CD14-positive monocyte (primary cell): ENCODE measurements at regions of chr16 and their contacts with region 1.

Region 1: DNA sequence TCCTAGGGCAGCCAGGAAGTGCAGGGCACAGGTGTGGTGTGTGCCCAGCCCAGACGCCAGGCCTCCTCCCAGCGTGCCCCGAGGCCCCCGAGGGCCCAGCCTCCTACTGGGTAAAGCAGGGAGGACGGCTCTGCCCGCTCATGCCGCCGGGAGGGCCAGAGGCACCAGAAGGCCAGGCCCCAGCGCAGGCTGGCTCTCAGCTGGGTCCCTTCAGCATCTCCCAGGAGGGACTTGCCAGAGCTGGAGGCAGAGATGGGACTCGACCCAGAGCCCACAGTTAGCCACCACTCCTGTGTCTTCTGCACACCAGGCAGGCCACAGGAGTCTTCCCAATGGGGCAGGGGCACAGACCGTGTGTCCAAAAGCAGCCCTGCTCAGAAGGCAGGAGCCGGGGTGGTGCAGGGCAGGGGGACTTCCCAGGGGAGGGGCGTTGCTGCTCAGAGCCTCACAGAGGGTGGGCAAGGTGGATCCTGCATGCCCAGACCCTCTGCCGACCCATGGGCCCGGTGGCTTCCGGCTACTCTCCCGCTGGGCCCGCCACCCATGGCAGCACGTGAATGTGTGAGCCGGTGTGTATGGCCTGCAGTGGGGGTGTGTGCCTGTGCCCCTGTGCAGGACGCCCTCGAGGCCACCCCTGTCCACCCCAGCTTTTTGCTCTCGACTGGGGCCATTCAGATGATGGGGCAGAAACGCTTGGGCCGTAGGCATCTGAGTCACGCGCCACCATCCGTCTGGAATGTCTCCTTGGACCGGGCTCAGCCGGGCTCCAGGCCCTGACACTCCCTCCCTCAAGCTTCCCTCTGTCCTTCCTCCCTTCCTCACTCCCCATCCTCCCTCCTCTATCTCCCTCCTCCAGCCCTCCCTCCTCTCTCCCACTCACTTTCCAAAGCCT is 5.7 kb upstream of the ZNF469 start:
- DNase-seq: no peak
- H3K4me3 ChIP-seq: no peak overlapping the region
- H3K4me3 Mint-ChIP-seq: no peak overlapping the region
- H3K27ac ChIP-seq: no peak overlapping the region
- H3K27ac Mint-ChIP-seq: no peak overlapping the region
- H3K4me1 ChIP-seq: no peaks in the 10 kb centered on the region
- H3K4me1 Mint-ChIP-seq: no peaks in the 10 kb centered on the region
- H3K27me3 ChIP-seq: peaks cover 0 to 14% of the 10 kb centered on the region in 2 donors
- H3K27me3 Mint-ChIP-seq: peaks cover 3 to 9% (median 7%) of the 10 kb centered on the region in 3 donors
- CTCF ChIP-seq: no peak

Region 2: DNA sequence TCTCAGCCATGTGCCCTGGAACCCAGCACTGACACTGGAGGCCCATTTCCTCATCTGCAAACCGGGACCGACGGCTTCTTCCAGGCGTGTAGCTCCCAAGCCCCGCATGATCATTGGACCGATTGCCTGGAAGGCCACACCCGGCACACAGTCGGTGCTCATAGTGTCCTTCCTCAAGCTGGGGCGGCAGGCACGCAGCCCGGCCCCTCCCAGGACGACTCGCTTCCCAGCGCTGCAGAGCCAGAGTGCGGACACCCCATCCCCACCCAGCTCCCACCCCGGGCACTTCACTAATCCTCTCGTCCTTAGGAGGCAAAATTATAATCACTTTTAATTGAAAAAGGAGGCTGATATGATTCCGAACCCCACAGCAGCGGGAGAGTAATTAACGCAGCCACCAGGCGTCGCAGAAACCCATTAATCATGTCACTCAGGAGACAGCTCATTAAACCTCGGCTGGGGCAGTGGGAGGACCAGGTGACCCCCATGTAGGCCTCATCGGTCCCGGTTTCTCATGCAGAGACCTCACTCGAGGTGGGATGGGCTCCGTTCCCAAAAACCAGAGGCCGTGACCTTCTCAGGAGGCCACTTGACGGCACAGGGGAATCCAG is 38.7 kb after region 1 on chr16:
- intact Hi-C with region 1: no loop called
- DNase-seq: no peak
- H3K4me3 ChIP-seq: no peak overlapping the region
- H3K4me3 Mint-ChIP-seq: no peak overlapping the region
- H3K27ac ChIP-seq: no peak overlapping the region
- H3K27ac Mint-ChIP-seq: peak overlapping the region in 2 of 7 donors; percentile 6 to 11
- H3K4me1 ChIP-seq: no peaks in the 10 kb centered on the region
- H3K4me1 Mint-ChIP-seq: no peaks in the 10 kb centered on the region
- H3K27me3 ChIP-seq: no peaks in the 10 kb centered on the region
- H3K27me3 Mint-ChIP-seq: peaks cover 0 to 6% (median 3%) of the 10 kb centered on the region in 3 donors
- CTCF ChIP-seq: no peak

Region 3: DNA sequence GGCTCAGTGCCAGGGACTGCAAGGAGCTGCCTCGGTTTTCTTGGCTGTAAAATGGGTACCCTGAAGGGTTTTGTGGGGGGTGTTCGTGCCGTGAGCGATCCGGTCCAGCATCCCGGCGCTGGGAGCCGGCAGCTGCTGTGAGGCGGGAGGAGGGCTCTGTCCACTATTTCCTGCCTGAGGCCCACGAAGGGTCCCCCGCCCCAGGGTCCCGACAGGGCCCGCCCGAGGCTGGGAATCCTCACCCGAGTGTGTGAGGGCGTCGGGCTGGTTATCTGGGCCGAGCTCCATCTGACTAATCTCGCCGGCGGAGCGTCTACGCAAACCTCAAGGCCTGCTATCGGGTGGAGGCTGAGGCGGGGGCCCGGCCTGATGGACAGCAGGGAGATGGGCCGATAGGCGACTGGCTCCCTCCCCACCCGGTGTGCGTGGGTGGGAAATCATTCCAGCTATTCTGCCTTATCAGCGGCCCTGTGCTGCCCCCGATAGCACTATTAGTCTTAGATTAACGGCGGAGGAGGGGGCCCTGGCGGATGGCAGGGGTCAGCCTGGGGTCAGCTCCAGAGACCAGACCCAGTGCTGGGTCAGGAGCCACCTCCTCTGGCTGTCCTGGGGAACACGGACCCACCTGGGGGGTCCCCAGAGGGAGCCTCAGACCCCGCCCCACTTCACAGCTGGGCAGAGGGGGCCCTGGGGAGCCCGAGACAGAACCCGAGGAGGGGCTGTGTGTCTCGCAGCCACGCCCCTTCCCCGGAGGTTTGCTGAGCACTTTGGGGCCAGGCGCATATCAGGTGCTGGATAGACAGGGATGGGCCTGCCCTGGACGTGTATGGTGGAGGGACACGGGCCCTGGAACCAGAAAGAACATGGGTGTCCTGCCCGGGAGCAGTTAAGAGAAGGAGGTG is 120.7 kb after region 1 on chr16:
- intact Hi-C with region 1: loop called in 1 of 2 experiments (anchors 10 kb)
- DNase-seq: no peak
- H3K4me3 ChIP-seq: no peak overlapping the region
- H3K4me3 Mint-ChIP-seq: no peak overlapping the region
- H3K27ac ChIP-seq: no peak overlapping the region
- H3K27ac Mint-ChIP-seq: no peak overlapping the region
- H3K4me1 ChIP-seq: no peaks in the 10 kb centered on the region
- H3K4me1 Mint-ChIP-seq: no peaks in the 10 kb centered on the region
- H3K27me3 ChIP-seq: no peaks in the 10 kb centered on the region
- H3K27me3 Mint-ChIP-seq: peaks cover 0 to 18% (median 4%) of the 10 kb centered on the region in 3 donors
- CTCF ChIP-seq: no peak